A549 (cell line): ENCODE measurements at regions of chr19 and their contacts with region 1.

Region 1: DNA sequence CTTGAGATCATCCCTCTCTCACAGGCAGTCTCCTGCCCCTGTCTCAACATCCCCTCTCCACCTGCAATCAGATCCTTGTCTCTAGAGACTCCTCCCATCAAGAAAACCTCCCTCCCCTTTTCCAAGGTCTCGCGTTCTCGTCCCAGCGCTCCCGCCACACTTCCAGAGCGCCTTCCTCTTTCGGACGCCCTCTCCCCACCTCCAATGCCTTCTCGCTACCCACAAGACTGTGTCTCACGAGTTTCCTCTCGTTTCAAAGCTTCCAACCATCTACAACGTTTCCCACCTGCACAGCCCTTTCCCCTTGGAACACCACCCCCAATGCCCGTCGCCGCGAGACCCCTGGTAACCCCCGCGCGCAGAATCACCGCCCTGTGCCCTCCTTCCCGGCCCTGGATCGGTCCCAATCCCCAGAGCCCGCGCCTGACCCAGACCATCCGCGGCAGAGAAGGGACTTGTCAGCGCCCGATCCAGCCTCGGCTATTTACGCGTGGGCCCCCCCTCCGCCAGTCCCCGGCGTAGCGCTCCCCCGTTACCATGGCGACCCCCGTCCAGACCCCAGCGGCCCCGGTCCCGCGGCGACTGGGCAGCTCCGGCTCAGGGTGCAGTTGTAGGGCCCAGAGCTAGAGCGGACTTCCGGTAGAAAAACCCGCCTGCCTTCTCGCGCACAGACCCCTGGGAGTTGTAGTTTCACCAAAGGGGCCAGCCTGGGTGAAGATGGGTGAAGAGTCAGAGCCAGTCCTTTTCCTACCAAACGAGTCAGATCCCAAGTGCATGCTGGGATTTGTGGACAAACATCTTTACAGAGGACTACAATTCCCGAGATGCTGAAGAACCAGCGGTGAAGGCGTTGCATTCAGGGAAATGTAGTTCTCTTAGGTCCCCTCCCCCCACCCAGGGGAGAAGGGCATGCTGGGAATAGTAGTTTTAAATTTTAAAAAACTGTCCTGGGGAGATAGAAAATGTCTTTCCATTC is at the start of gene AP2S1:
- DNase-seq: peak; percentile 99
- ATAC-seq: peak; percentile 97 to 98
- H3K4me3 ChIP-seq: peak within 1 kb of the TSS; percentile 67
- H3K27ac ChIP-seq: peak within 1 kb of the TSS; percentile 81 to 93
- H3K4me1 ChIP-seq: peaks cover 10% of the 10 kb centered on the region
- CTCF ChIP-seq: no peak
- EP300 ChIP-seq: no peak
- POLR2A ChIP-seq: peak; percentile 79
- RAD21 ChIP-seq: 0 out of 5 replicates have a peak, but pooled peaks of 1 of the 2 experiments have one; percentile 5
- polyA plus RNA-seq, gene AP2S1: 117 and 150 TPM in 2 replicates

Region 2: DNA sequence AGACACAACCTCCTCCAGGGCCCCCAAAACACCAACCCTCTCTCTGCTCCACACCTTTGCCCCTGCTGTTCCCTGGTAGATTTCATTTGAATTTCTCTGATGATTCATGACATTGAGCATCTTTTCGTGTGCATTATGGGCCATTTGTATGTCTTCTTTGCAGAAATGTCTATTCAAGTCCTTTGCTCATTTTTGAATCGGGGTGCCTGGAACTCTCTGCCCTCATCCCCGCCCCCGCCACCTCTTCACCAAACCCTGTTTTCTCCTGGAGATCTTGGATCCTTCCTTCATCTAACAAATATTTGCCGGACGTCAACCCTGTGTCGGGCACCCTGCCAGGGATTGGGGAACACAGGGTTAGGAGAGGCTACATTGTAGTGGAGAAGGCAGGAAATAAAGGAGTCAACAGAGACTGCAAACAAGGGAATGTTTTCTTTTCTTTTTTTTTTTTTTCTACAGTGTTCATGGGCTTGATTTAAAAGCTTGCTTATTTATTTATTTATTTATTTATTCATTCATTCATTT is 36.6 kb before region 1 on chr19:
- CTCF ChIA-PET with region 1: no interaction called
- POLR2A ChIA-PET with region 1: no interaction called
- DNase-seq: peak; percentile 47 to 84
- ATAC-seq: peak; percentile 65 to 75
- H3K4me3 ChIP-seq: no peak overlapping the region
- H3K27ac ChIP-seq: peak overlapping the region; percentile 38 to 74
- H3K4me1 ChIP-seq: peaks cover 18% of the 10 kb centered on the region
- CTCF ChIP-seq: no peak
- EP300 ChIP-seq: no peak
- POLR2A ChIP-seq: no peak
- RAD21 ChIP-seq: no peak

Region 3: GRCh38 chr19:47005873-47006272 is 155.4 kb after region 1 on chr19:
- CTCF ChIA-PET with region 1: interaction called, 88 read pairs
- POLR2A ChIA-PET with region 1: no interaction called
- DNase-seq: peak in 1 of 2 experiments; percentile 67
- ATAC-seq: peak; percentile 6 to 32; a peak in 3 of 6 replicates
- H3K4me3 ChIP-seq: no peak overlapping the region
- H3K27ac ChIP-seq: no peak overlapping the region
- H3K4me1 ChIP-seq: peaks cover 4% of the 10 kb centered on the region; the same call in 1 of the 3 replicates
- CTCF ChIP-seq: no peak
- EP300 ChIP-seq: no peak
- POLR2A ChIP-seq: no peak
- RAD21 ChIP-seq: no peak